Activated CD4-positive, alpha-beta memory T cell treated with anti-CD3 and anti-CD28 coated beads, Interleukin-2, amount 10 ng/mL, durations not matched to agents 7 days and 5 days (primary cell): ENCODE measurements at regions of chr3 and their contacts with region 1.

Region 1: DNA sequence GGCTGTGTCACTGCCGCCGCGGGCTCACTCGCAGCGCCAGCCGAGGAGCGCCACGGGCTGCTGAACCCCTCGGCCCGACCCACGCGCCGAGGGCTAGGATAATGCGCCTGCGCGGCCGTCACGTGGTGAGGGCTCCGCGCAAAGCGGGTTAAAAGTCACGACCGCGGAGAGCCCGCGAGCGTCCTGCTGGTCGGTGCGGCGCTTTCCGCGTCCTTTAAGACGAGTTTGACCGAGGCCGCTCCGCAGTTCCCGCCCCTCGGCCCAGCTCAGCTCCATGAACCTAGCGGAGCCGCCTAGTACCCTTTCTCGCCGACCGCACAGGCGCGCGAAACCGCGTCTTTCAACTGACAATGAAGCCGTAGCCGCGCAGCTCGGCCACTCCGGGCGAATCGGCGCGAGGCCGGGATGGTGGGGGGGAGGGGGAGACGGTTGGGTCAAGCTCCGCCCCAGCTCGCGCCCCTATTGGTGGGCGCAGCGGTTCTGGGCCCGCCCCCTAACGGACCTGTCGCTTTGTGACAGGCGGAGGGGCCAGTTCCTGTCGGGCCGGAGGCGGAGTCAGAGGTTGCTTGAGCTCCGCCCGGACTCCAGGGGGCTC is 636 bp upstream of the STT3B start:
- DNase-seq: peak; percentile 99
- H3K4me3 Mint-ChIP-seq: no peak overlapping the region
- H3K27ac Mint-ChIP-seq: peak overlapping the region; percentile 96
- H3K4me1 Mint-ChIP-seq: peaks cover 11% of the 10 kb centered on the region
- H3K27me3 Mint-ChIP-seq: no peaks in the 10 kb centered on the region

Region 2: DNA sequence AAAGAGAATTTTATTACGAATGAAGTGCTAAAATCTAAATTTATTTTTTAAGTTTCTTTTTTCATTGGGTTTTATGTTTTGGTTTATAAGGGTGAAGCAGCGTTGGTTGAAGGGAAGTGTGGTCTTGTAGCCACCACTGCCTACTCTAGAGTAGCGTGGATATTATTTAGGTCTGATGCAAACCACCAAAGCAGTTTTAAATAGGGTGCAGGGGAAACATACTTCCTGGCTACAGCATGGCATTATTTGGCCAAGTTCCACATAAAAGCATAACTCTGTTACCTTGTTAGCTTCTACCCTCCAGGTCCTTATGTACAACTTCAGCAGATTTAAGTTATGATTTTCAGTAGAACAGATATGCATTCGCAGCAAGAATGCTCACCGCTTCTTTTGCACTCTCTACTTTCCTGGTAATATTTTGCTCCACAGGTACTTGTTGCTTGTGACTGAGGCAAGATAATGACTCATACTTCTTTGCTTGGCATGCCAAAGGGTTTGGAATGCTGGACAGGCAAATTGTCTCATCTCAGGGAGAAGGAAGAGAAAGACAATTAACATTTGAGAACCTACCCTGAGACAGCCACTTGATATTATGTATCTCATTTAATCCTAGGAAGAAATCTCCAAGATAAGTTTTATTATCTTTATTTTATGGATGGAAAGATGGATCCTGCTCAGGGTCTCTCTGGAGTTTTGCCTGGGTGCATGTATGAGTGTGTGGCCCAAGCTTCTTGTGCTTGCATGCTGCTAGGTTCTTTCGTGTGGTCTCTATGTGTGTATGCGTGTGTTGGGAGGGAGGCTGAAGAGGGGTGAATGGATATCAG is 920.3 kb before region 1 on chr3:
- CTCF ChIA-PET with region 1: no interaction called
- POLR2A ChIA-PET with region 1: interaction called, 37 read pairs
- DNase-seq: no peak
- H3K4me3 Mint-ChIP-seq: peak overlapping the region; percentile 93
- H3K27ac Mint-ChIP-seq: peak overlapping the region; percentile 88
- H3K4me1 Mint-ChIP-seq: peaks cover 72% of the 10 kb centered on the region
- H3K27me3 Mint-ChIP-seq: no peaks in the 10 kb centered on the region

Region 3: GRCh38 chr3:31227131-31227562 is 304.9 kb before region 1 on chr3:
- CTCF ChIA-PET with region 1: interaction called, 21 read pairs
- POLR2A ChIA-PET with region 1: interaction called, 97 read pairs
- DNase-seq: no peak
- H3K4me3 Mint-ChIP-seq: no peak overlapping the region
- H3K27ac Mint-ChIP-seq: peak overlapping the region; percentile 91
- H3K4me1 Mint-ChIP-seq: peaks cover 87% of the 10 kb centered on the region
- H3K27me3 Mint-ChIP-seq: no peaks in the 10 kb centered on the region

Region 4: DNA sequence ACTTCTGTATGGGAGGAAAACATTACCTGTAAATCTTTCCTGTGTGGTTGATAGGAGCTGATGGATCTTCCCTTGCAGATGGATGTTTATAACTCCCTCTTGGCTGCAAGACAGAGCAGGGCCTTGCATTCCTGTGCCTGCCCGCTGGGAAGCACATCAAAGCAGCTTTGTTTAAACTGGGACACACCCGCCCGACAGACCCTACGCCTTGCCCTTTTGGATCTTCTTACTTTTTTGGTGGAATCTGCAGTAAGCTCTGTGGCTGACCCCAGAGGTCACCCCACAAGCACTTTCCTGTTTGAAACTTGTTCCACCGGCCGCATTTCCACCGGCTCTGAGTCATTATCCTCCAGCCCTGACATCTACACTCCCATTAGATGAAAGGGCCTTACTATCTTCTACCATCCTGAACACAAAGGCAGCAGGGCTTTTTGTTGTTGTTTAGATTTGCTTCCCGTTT is 243.4 kb before region 1 on chr3:
- CTCF ChIA-PET with region 1: no interaction called
- POLR2A ChIA-PET with region 1: interaction called, 16 read pairs
- DNase-seq: peak; percentile 83
- H3K4me3 Mint-ChIP-seq: peak overlapping the region; percentile 52
- H3K27ac Mint-ChIP-seq: peak overlapping the region; percentile 82
- H3K4me1 Mint-ChIP-seq: peaks cover 47% of the 10 kb centered on the region
- H3K27me3 Mint-ChIP-seq: no peaks in the 10 kb centered on the region

Region 5: DNA sequence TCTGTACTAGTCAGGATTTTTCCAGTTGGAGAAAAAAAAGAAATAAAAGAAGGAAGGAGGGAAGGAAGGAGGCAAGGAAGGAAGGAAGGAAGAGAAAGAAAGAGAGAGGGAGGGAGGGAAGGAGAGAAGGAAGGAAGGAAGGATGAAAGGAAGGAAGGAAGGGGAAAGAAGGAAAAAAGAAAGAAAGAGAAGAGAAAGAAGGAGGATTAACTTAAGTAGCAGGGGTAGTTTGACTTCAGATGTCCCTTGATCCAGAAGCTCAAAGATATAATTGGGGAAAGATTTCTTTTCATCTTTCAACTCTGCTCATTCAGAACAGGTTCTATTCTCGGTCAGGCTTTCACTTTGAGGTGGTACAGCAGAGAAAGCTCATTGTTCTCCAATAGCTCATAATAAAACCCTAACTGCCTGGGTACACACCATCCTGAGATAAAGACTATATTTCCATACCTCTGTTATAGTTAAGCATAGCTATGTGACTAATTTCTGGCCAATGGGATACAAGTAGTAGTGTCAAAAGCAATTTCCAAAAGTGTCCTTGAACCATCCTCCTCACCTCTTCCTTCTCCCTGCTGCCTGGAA is 22.9 kb before region 1 on chr3:
- CTCF ChIA-PET with region 1: interaction called, 7 read pairs
- POLR2A ChIA-PET with region 1: interaction called, 43 read pairs
- DNase-seq: no peak
- H3K4me3 Mint-ChIP-seq: no peak overlapping the region
- H3K27ac Mint-ChIP-seq: peak overlapping the region; percentile 62
- H3K4me1 Mint-ChIP-seq: peaks cover 51% of the 10 kb centered on the region
- H3K27me3 Mint-ChIP-seq: no peaks in the 10 kb centered on the region

Region 6: GRCh38 chr3:31568649-31569048 is 36.6 kb after region 1 on chr3:
- CTCF ChIA-PET with region 1: interaction called, 4 read pairs
- POLR2A ChIA-PET with region 1: interaction called, 11 read pairs
- DNase-seq: no peak
- H3K4me3 Mint-ChIP-seq: no peak overlapping the region
- H3K27ac Mint-ChIP-seq: no peak overlapping the region
- H3K4me1 Mint-ChIP-seq: peaks cover 60% of the 10 kb centered on the region
- H3K27me3 Mint-ChIP-seq: no peaks in the 10 kb centered on the region

Region 7: GRCh38 chr3:31754575-31755278 is 222.6 kb after region 1 on chr3:
- CTCF ChIA-PET with region 1: no interaction called
- POLR2A ChIA-PET with region 1: interaction called, 34 read pairs
- DNase-seq: peak; percentile 25
- H3K4me3 Mint-ChIP-seq: no peak overlapping the region
- H3K27ac Mint-ChIP-seq: peak overlapping the region; percentile 96
- H3K4me1 Mint-ChIP-seq: peaks cover 59% of the 10 kb centered on the region
- H3K27me3 Mint-ChIP-seq: no peaks in the 10 kb centered on the region